ENCODE measurements at regions of chr10 and their contacts with region 1.

Region 1: GRCh38 chr10:77179015-77179695 is 458.5 kb downstream of the KCNMA1 start:
- DNase-seq: peak; percentile 45 to 75
- ATAC-seq: peak; percentile 85 to 90 (median 88)
- H3K4me3 ChIP-seq: no peak overlapping the region
- H3K27ac ChIP-seq: peak overlapping the region; percentile 77
- H3K4me1 ChIP-seq: peaks cover 26% of the 10 kb centered on the region
- H3K27me3 ChIP-seq: no peaks in the 10 kb centered on the region
- CTCF ChIP-seq: no peak

Region 2: DNA sequence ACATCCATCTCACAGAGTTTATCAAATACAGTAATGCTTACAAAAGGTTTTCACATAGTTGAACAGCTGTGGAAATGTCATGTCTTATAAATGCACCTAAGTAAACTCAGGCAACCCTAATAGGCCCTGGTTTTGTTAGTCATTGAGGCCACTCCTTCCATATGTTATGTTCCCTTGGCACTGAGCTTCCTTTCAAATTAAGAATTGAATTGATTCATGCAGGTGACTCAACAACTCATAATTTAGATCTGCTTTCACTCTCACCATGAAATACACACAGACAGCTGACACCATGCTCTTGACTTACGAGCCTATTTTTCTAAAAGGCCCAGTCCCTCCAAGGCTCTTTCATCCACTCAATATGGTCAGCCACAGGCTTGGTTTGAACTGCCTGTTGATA is 18.5 kb before region 1 on chr10:
- intact Hi-C with region 1: no loop called
- DNase-seq: no peak
- ATAC-seq: peak in 3 of 4 donors; percentile 43 to 68 (median 63)
- H3K4me3 ChIP-seq: no peak overlapping the region
- H3K27ac ChIP-seq: no peak overlapping the region
- H3K4me1 ChIP-seq: peaks cover 9% of the 10 kb centered on the region
- H3K27me3 ChIP-seq: no peaks in the 10 kb centered on the region
- CTCF ChIP-seq: no peak

Region 3: DNA sequence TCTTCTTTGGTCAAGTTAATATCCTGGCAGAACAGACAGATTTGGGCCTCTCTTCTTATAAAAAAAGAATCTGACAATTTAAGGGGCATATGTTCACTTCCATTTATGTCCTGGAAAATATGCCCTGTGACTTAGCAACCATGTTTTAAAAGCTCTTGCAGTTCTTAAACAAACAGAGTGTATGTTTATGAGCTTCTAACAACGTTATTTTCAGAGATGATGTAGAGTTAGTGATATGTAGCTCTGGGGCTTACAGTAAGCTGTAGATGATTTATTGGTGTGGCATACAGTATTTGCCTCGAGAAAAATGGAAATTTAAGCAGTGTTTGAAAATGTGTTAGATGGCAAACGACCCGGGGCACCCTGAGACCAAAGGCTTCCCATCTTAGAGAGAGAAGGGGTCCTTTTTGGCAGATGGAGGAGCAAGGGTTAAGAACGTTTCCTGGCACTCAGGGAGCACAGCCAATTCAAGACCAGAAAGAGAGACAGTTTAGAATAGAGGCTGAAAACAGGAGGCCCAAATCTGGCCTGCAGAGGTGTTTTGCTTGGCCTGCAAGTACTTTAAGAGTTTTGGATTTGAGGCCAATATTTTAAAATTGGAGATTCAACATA is 61.0 kb after region 1 on chr10:
- intact Hi-C with region 1: loop called (anchors 2 to 5 kb)
- DNase-seq: no peak
- ATAC-seq: peak in 3 of 4 donors; percentile 37 to 54 (median 43)
- H3K4me3 ChIP-seq: no peak overlapping the region
- H3K27ac ChIP-seq: peak overlapping the region; percentile 38
- H3K4me1 ChIP-seq: peaks cover 18% of the 10 kb centered on the region
- H3K27me3 ChIP-seq: no peaks in the 10 kb centered on the region
- CTCF ChIP-seq: no peak

Region 4: DNA sequence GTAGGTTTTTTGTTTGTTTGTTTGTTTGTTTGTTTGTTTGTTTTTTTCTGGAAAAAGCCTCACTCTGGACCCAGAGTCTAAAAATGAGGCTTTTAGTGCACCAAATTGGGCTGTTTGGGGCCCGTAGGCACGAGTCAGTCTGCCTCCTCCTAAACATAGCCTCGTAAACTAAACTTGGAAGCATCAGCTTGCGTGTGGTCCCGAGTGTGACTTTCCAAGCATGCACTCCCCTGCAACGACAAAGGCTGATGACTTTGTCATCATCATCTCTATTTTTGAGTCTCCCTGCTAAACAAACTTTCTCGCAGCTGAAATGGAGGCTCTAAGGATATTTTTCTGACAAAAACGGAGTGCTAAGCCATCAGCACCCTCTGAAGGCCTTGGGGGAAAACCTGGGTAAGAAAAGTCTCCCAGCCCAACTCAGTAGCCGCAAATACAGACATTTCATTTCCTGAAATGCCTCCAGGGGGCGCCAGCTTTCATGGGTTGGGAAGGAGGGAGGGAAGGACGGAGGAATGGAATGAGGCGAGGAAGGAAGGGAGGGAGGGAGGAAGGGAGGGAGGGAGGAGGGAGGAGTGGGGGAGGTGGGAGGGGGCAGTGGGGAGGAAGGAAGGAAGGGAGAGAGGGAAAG is 212.6 kb after region 1 on chr10:
- intact Hi-C with region 1: loop called in 1 of 2 experiments (anchors 5 kb)
- DNase-seq: peak; percentile 74 to 84
- ATAC-seq: peak; percentile 65 to 85 (median 70)
- H3K4me3 ChIP-seq: no peak overlapping the region
- H3K27ac ChIP-seq: peak overlapping the region; percentile 30
- H3K4me1 ChIP-seq: peaks cover 26% of the 10 kb centered on the region
- H3K27me3 ChIP-seq: no peaks in the 10 kb centered on the region
- CTCF ChIP-seq: peak; percentile 59